HEK293 (cell line): ENCODE measurements at regions of chr5 and their contacts with region 1.

Region 1: GRCh38 chr5:172188033-172188892 is at the start of gene STK10:
- H3K4me3 ChIP-seq: peak within 1 kb of the TSS; percentile 48
- H3K27ac ChIP-seq: peak within 1 kb of the TSS; percentile 59
- H3K4me1 ChIP-seq: peaks cover 4% of the 10 kb centered on the region; the same call in 1 of the 2 replicates
- CTCF ChIP-seq: peak; percentile 98

Region 2: GRCh38 chr5:171258737-171259415 is 929.4 kb before region 1 on chr5:
- CTCF ChIA-PET with region 1: no interaction called
- POLR2A ChIA-PET with region 1: no interaction called
- H3K4me3 ChIP-seq: no peak overlapping the region
- H3K27ac ChIP-seq: no peak overlapping the region
- H3K4me1 ChIP-seq: no peaks in the 10 kb centered on the region
- CTCF ChIP-seq: no peak

Region 3: DNA sequence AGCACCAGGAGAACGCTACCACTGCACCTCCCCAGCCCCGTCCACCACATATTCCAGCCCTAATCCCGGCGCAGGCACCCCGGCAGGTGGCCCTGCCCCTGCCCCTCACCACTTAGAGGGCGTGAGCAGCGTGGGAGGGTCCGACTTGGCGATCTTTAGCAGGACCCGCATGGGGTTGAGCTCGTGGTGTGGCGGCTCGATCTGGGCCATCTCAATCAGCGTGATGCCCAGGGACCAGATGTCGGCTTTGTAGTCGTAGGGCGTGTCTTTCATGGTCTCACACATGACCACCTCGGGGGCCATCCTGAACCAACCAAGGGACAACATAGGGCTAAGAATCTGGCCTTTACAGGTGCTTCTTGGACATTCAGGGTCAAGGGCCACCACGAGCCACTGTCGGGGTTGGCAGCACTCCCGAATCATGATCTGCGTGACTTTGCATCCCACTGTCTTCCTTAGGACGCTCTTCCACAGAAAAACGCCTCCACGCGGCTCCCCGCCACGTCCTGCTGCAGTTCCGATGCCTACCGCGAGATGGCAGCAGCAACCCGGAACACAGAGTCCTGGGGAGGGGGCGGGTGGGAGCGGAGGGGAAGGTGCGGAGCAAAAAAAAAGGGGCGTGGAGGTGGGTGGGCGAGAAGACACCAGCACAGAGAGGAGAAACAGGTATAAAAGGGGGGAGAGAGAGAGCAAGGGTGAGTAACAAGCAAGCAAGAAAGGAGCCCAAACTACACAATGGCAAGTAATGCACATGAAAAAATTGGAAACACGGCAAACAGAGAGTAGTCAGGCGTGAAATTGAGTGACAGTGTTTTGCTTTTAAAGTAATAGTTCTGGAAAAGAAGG is 81.5 kb before region 1 on chr5:
- CTCF ChIA-PET with region 1: interaction called, 44 read pairs
- POLR2A ChIA-PET with region 1: interaction called, 5 read pairs
- H3K4me3 ChIP-seq: peak overlapping the region; percentile 25
- H3K27ac ChIP-seq: no peak overlapping the region
- H3K4me1 ChIP-seq: peaks cover 11% of the 10 kb centered on the region; the same call in 1 of the 2 replicates
- CTCF ChIP-seq: peak; percentile 91

Region 4: DNA sequence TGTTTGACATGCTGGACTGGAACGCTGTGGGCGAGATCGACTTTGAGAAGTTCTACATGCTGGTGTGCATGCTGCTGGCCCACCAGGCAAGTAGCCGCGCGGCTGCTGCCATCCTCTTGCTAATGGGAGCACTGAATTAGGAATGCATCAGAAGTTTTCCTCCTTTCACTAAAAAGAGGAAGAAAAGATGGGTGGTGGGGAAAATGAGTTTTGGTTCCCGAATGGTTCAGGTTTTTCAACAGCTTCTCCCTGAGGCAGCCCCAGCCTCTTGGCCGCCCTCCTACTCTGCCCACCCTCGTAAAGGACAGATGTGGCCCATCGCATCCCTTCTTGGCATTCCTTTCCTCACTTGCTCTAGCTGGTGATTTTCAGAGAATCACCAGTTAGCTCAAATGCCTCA is 11.2 kb after region 1 on chr5:
- CTCF ChIA-PET with region 1: interaction called, 19 read pairs
- POLR2A ChIA-PET with region 1: interaction called, 6 read pairs
- H3K4me3 ChIP-seq: no peak overlapping the region
- H3K27ac ChIP-seq: no peak overlapping the region
- H3K4me1 ChIP-seq: 0 out of 2 replicates have a peak, but pooled peaks cover 3% of the 10 kb centered on the region
- CTCF ChIP-seq: no peak

Region 5: GRCh38 chr5:172283020-172283861 is 95.0 kb after region 1 on chr5 and contains the start of gene UBTD2:
- CTCF ChIA-PET with region 1: interaction called, 5 read pairs
- POLR2A ChIA-PET with region 1: interaction called, 18 read pairs
- H3K4me3 ChIP-seq: peak within 1 kb of the TSS; percentile 93
- H3K27ac ChIP-seq: peak within 1 kb of the TSS; percentile 94
- H3K4me1 ChIP-seq: peaks cover 18% of the 10 kb centered on the region
- CTCF ChIP-seq: peak; percentile 80

Region 6: GRCh38 chr5:172293054-172293744 is 104.9 kb after region 1 on chr5:
- CTCF ChIA-PET with region 1: interaction called, 14 read pairs
- POLR2A ChIA-PET with region 1: no interaction called
- H3K4me3 ChIP-seq: no peak overlapping the region
- H3K27ac ChIP-seq: no peak overlapping the region
- H3K4me1 ChIP-seq: peaks cover 4% of the 10 kb centered on the region; the same call in 1 of the 2 replicates
- CTCF ChIP-seq: peak; percentile 85

Region 7: DNA sequence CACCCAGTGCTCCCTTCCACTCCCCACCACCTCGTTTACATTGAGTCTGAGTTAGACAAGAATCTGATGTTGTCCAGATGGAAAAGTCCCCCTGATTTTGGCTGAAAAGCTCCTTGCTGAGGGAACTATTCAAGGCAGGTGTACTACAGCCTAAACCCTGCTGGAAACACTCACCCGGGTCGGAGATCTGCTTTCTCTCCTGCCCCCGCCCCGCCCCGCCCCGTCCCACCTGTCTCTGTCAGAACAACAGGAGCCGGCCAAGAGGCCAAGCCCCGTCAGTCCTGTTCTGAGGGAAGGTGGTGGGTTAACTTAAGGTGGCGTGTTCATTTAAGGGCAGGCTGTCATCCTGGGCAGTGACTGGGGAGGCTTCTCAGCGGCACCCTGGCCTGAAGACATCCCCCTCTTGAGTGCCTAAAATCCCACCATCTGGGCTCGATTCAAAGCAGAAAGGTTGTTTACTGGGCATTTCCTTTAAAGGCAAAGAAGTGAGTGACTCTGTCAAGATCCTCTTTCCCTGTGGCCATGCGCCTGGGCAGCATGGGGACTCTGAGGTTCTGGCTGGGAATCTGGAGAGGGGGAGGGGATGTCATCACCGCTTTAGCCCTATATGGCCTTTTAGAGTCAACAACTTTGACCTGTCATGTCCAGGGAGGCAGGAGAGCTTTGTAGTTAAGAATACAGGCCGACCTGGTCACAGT is 381.7 kb after region 1 on chr5:
- CTCF ChIA-PET with region 1: no interaction called
- POLR2A ChIA-PET with region 1: no interaction called
- H3K4me3 ChIP-seq: no peak overlapping the region
- H3K27ac ChIP-seq: no peak overlapping the region
- H3K4me1 ChIP-seq: no peaks in the 10 kb centered on the region
- CTCF ChIP-seq: no peak

Region 8: DNA sequence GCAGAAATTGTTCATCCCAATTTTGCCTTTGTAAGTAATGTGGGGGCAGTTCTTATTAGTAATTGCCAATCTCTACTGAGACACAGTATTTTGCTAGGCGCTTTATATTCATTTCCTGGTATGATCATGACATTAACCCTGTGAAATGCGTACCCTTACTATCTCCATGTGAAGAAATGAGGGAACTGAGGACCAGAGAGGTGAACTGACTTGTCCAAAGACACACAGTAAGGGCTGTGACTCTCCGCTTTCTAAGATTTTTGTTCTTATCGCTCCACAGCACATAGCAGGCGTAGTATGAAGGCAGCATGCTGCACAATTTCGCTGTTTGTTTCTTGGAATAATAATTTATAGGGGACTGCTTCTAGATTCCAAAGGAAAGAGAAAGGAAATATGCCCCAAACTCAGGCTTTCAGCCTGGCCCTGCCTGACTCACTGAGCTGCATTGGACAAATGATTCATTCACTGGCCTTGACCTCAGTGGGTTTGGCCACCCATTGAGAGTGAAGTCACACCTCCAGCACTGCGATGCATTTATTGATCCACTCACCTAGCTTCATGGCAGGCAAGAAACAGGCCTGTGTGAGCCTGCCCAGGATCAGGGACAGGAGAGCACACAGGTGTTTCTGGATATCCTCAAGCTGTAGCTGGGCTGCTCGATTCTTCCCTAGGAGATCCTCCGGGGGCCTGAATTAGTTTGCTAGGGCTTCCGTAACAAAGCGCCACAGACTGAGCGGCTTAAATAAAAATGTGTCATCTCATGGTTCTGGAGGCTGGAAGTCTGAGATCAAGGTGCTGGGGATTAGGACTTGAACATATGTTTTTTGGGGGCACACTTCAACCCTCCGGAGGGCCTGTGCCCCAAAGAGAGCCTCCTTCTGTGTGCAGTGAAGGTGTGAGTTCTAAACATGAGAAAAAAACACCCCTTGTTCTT is 589.9 kb after region 1 on chr5:
- CTCF ChIA-PET with region 1: no interaction called
- POLR2A ChIA-PET with region 1: interaction called, 13 read pairs
- H3K4me3 ChIP-seq: no peak overlapping the region
- H3K27ac ChIP-seq: no peak overlapping the region
- H3K4me1 ChIP-seq: no peaks in the 10 kb centered on the region
- CTCF ChIP-seq: no peak